ENCODE measurements at regions of chr17 and their contacts with region 1.

Region 1: DNA sequence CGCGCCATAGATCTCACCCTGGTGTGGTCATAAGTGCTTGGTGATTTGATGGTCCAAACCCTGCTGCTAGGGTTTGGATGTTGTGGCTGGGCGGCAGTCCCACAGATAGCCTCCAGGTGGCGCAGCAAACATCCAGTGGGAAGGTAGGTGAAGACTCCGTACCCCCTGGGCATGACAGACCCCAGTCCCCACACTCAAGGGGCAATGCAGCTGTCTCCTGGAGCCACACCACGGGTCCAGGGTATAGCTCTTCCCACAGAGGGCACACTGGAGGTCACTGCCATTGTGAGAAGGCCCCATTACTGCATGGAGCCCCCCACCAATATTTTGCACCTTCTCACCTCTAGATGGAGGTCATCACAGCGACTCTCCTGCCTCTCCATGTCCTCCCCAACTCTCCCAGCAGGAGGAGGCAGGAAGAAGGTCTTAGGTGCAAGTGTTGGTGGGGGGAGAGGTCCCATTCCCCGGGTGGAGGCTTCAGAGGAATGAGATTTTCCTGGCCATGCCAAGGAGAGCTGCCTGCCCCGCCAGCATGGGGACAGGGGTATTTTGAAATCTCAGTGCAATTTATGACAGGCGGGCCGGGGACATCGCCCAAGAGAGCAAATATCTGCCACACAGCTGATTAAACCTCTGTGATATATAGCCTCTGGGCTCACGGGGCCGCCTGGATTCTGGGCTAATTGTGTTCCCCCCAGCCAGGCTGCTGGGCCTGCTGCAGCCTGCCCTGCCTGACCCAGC is 17.1 kb upstream of the C17orf113 start:
- DNase-seq: peak; percentile 76
- H3K4me3 Mint-ChIP-seq: no peak overlapping the region
- H3K27ac Mint-ChIP-seq: no peak overlapping the region
- H3K4me1 Mint-ChIP-seq: peaks cover 20% of the 10 kb centered on the region
- H3K27me3 Mint-ChIP-seq: peaks cover 15% of the 10 kb centered on the region

Region 2: GRCh38 chr17:42101513-42102319 is 34.2 kb after region 1 on chr17:
- CTCF ChIA-PET with region 1: interaction called, 12 read pairs
- POLR2A ChIA-PET with region 1: no interaction called
- DNase-seq: peak; percentile 72
- H3K4me3 Mint-ChIP-seq: no peak overlapping the region
- H3K27ac Mint-ChIP-seq: no peak overlapping the region
- H3K4me1 Mint-ChIP-seq: peaks cover 7% of the 10 kb centered on the region
- H3K27me3 Mint-ChIP-seq: peaks cover 14% of the 10 kb centered on the region

Region 3: GRCh38 chr17:42120770-42121769 is 53.5 kb after region 1 on chr17 and contains the start of gene KAT2A:
- CTCF ChIA-PET with region 1: interaction called, 32 read pairs
- POLR2A ChIA-PET with region 1: interaction called, 8 read pairs
- DNase-seq: peak; percentile 80
- H3K4me3 Mint-ChIP-seq: peak within 1 kb of the TSS; percentile 61
- H3K27ac Mint-ChIP-seq: peak within 1 kb of the TSS; percentile 54
- H3K4me1 Mint-ChIP-seq: peaks cover 37% of the 10 kb centered on the region
- H3K27me3 Mint-ChIP-seq: no peaks in the 10 kb centered on the region
- total RNA-seq, gene KAT2A: 25.7 to 26.7 TPM

Region 4: GRCh38 chr17:42354956-42355843 is 287.7 kb after region 1 on chr17:
- CTCF ChIA-PET with region 1: no interaction called
- POLR2A ChIA-PET with region 1: no interaction called
- DNase-seq: no peak
- H3K4me3 Mint-ChIP-seq: no peak overlapping the region
- H3K27ac Mint-ChIP-seq: no peak overlapping the region
- H3K4me1 Mint-ChIP-seq: peaks cover 25% of the 10 kb centered on the region
- H3K27me3 Mint-ChIP-seq: no peaks in the 10 kb centered on the region

Measured in activated CD4-positive, alpha-beta memory T cell treated with anti-CD3 and anti-CD28 coated beads, Interleukin-2, amount 10 ng/mL, durations not matched to agents 7 days and 5 days (primary cell).